ENCODE measurements at regions of chr11 and their contacts with region 1.

Region 1: GRCh38 chr11:11798586-11799438 is 43.0 kb upstream of the USP47 start:
- DNase-seq: peak; percentile 60
- ATAC-seq: peak; percentile 97
- H3K4me3 ChIP-seq: no peak overlapping the region
- H3K27ac ChIP-seq: no peak overlapping the region
- H3K4me1 ChIP-seq: peaks cover 0 to 3% of the 10 kb centered on the region in 2 experiments; a peak in 1 of 4 replicates
- H3K27me3 ChIP-seq: no peaks in the 10 kb centered on the region
- CTCF ChIP-seq: peak; percentile 89 to 97 (median 95)
- POLR2A ChIP-seq: no peak
- RAD21 ChIP-seq: peak; percentile 92

Region 2: GRCh38 chr11:11621573-11622319 is 177.1 kb before region 1 on chr11 and contains the start of gene GALNT18:
- CTCF ChIA-PET with region 1: no interaction called
- POLR2A ChIA-PET with region 1: no interaction called
- RAD21 ChIA-PET with region 1: no interaction called
- intact Hi-C with region 1: no loop called
- DNase-seq: peak; percentile 81
- ATAC-seq: peak; percentile 87
- H3K4me3 ChIP-seq: peak within 1 kb of the TSS; percentile 85 to 91
- H3K27ac ChIP-seq: peak within 1 kb of the TSS; percentile 58
- H3K4me1 ChIP-seq: peaks cover 17 to 23% of the 10 kb centered on the region in 2 experiments; a peak in 3 of 4 replicates
- H3K27me3 ChIP-seq: no peaks in the 10 kb centered on the region
- CTCF ChIP-seq: peak; percentile 20 to 42 (median 29); a peak in 3 of 6 replicates
- POLR2A ChIP-seq: peak; percentile 18
- RAD21 ChIP-seq: peak; percentile 25; the same call in 1 of the 2 replicates
- total RNA-seq, gene GALNT18: 19.9 TPM

Region 3: GRCh38 chr11:11731311-11732083 is 67.3 kb before region 1 on chr11:
- CTCF ChIA-PET with region 1: no interaction called
- POLR2A ChIA-PET with region 1: no interaction called
- RAD21 ChIA-PET with region 1: no interaction called
- intact Hi-C with region 1: no loop called
- DNase-seq: peak; percentile 68
- ATAC-seq: peak; percentile 90
- H3K4me3 ChIP-seq: peak overlapping the region in 1 of 2 experiments; percentile 23; a peak in 2 of 4 replicates
- H3K27ac ChIP-seq: peak overlapping the region; percentile 33
- H3K4me1 ChIP-seq: peaks cover 18 to 23% of the 10 kb centered on the region in 2 experiments
- H3K27me3 ChIP-seq: no peaks in the 10 kb centered on the region
- CTCF ChIP-seq: no peak
- POLR2A ChIP-seq: no peak
- RAD21 ChIP-seq: no peak

Region 4: GRCh38 chr11:11821899-11822298 is 23.1 kb after region 1 on chr11:
- CTCF ChIA-PET with region 1: no interaction called
- POLR2A ChIA-PET with region 1: no interaction called
- RAD21 ChIA-PET with region 1: no interaction called
- intact Hi-C with region 1: no loop called
- DNase-seq: no peak
- ATAC-seq: no peak
- H3K4me3 ChIP-seq: no peak overlapping the region
- H3K27ac ChIP-seq: no peak overlapping the region
- H3K4me1 ChIP-seq: no peaks in the 10 kb centered on the region
- H3K27me3 ChIP-seq: no peaks in the 10 kb centered on the region
- CTCF ChIP-seq: no peak
- POLR2A ChIP-seq: no peak
- RAD21 ChIP-seq: no peak

Region 5: GRCh38 chr11:11848891-11849746 is 50.3 kb after region 1 on chr11:
- CTCF ChIA-PET with region 1: interaction called, 3 read pairs
- POLR2A ChIA-PET with region 1: no interaction called
- RAD21 ChIA-PET with region 1: no interaction called
- intact Hi-C with region 1: loop called (anchors 1 kb)
- DNase-seq: peak; percentile 44
- ATAC-seq: peak; percentile 95
- H3K4me3 ChIP-seq: no peak overlapping the region
- H3K27ac ChIP-seq: no peak overlapping the region
- H3K4me1 ChIP-seq: peaks cover 19 to 31% of the 10 kb centered on the region in 2 experiments
- H3K27me3 ChIP-seq: no peaks in the 10 kb centered on the region
- CTCF ChIP-seq: peak; percentile 70 to 92 (median 83); a peak in 5 of 6 replicates
- POLR2A ChIP-seq: no peak
- RAD21 ChIP-seq: peak; percentile 71

Region 6: GRCh38 chr11:11876458-11876857 is 77.6 kb after region 1 on chr11:
- CTCF ChIA-PET with region 1: interaction called, 8 read pairs
- POLR2A ChIA-PET with region 1: no interaction called
- RAD21 ChIA-PET with region 1: no interaction called
- intact Hi-C with region 1: loop called (anchors 1 kb)
- DNase-seq: peak; percentile 41
- ATAC-seq: peak; percentile 78
- H3K4me3 ChIP-seq: no peak overlapping the region
- H3K27ac ChIP-seq: no peak overlapping the region
- H3K4me1 ChIP-seq: no peaks in the 10 kb centered on the region
- H3K27me3 ChIP-seq: no peaks in the 10 kb centered on the region
- CTCF ChIP-seq: peak; percentile 35 to 56 (median 52); a peak in 5 of 6 replicates
- POLR2A ChIP-seq: no peak
- RAD21 ChIP-seq: peak; percentile 38

Measured in HCT116 (cell line).